ENCODE measurements at regions of chr1 and their contacts with region 1.

Region 1: DNA sequence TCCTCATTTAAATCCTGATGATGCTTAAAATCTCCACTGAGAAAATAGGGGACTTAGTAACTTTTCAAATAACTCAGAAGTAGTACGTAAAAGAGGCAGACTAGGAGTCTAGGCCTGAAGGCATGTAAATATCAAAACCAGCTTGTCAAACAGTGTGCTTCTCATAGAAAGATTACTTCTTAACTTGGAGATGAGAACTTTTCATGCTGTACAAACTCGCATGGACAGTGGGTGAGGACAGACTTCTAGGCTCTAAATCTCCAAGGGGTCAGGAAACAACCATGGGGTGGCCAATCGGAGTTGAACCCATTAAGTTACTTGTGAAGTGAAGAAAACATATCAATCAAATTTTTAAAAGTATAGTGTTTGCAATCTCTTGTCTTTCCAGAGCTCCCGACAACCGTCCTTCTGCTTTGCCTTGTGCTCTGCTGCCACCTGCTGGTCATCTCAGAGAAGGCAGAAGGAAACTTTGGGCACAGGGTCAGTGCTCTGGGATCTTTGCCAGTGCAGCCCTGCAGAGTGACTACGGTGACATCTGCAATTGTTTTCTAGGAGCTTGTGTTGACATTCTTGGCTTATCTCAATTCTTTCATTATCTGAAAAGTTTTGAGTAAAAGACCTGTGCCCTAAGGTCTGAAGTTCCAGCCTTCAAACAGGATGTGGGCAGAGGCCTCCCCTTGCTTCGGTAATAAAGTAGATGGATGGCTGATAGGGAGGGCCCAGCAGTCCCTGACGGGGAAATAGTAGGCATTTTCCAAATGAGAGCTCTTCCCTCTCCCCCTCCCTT is 105.1 kb upstream of the PDE4B start:
- DNase-seq: peak; percentile 88
- ATAC-seq: peak; percentile 88
- H3K4me3 Mint-ChIP-seq: no peak overlapping the region
- H3K27ac Mint-ChIP-seq: no peak overlapping the region
- H3K4me1 Mint-ChIP-seq: peaks cover 2% of the 10 kb centered on the region
- H3K27me3 Mint-ChIP-seq: peaks cover 10% of the 10 kb centered on the region

Region 2: DNA sequence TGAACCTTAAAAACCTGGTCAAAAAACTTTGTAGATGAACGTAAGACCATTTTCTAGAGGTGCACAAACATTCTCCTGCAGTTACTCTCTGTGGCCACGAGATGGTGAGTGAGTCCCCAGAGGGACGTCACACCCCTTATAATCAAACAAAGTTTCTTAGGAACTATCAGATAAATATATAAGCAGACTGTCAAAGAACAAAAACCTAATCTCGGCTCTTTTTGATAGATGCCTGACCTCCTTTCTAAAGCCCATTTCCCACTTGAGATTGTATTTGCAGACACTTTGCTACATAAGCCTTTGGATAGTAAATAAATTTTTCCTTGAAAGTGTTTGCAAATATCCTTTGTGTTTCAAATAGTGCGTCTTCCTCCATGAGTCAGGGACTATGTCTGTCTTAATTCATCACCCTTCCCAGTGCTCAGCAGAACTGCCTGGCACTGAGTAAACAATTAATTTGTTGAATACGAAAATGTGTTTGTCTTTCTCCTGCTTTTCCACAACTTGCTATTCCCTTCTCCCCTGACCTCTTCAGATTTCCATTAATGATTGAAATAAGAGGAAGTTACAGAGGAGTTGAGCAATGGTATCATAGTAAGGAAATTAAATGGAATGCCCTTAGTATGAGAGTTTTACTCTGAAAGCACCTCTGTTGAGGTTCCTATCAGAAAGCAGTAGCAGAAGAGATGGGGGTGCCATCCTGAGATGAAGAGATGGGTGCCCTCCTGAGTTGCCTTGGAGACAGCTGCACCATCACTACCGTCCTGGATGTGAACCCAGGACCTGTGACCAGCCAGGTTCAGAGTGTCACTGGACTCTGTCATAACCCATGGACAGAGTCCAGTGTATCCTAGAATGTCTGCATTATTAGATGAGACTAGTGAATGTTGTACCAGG is 1000.5 kb before region 1 on chr1:
- CTCF ChIA-PET with region 1: no interaction called
- POLR2A ChIA-PET with region 1: no interaction called
- intact Hi-C with region 1: loop called (anchors 5 kb)
- DNase-seq: peak; percentile 51
- ATAC-seq: peak; percentile 76
- H3K4me3 Mint-ChIP-seq: no peak overlapping the region
- H3K27ac Mint-ChIP-seq: no peak overlapping the region
- H3K4me1 Mint-ChIP-seq: peaks cover 5% of the 10 kb centered on the region
- H3K27me3 Mint-ChIP-seq: no peaks in the 10 kb centered on the region

Region 3: DNA sequence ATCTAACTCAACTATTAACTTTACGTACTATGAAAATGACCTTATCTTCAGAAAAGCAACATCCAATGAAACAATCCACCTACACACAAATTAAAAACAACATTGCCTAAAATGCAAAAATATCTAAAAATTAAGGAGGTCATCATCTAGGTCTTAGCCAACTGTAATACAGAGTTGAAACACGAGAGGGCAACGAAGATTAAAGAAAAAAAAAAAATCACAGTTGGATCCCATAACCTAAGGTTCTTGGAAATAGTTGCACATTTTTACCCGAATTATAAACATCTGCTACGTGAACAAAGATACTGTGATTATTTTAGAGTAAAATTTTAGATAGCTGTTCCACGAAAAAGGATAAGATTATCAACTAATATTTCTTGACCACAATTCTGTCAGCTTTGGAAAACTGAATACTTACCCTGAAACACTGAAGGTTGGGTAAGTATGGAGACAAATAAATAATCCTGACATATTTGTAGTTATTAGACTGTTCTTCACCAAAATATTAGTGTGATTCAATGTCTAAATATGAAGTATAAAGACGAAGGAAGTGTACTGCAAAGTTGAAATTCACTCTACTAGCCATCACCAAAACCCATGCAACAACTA is 627.6 kb before region 1 on chr1:
- CTCF ChIA-PET with region 1: interaction called, 12 read pairs
- POLR2A ChIA-PET with region 1: no interaction called
- intact Hi-C with region 1: loop called (anchors 2 to 5 kb)
- DNase-seq: no peak
- ATAC-seq: no peak
- H3K4me3 Mint-ChIP-seq: no peak overlapping the region
- H3K27ac Mint-ChIP-seq: no peak overlapping the region
- H3K4me1 Mint-ChIP-seq: peaks cover 51% of the 10 kb centered on the region
- H3K27me3 Mint-ChIP-seq: no peaks in the 10 kb centered on the region

Region 4: DNA sequence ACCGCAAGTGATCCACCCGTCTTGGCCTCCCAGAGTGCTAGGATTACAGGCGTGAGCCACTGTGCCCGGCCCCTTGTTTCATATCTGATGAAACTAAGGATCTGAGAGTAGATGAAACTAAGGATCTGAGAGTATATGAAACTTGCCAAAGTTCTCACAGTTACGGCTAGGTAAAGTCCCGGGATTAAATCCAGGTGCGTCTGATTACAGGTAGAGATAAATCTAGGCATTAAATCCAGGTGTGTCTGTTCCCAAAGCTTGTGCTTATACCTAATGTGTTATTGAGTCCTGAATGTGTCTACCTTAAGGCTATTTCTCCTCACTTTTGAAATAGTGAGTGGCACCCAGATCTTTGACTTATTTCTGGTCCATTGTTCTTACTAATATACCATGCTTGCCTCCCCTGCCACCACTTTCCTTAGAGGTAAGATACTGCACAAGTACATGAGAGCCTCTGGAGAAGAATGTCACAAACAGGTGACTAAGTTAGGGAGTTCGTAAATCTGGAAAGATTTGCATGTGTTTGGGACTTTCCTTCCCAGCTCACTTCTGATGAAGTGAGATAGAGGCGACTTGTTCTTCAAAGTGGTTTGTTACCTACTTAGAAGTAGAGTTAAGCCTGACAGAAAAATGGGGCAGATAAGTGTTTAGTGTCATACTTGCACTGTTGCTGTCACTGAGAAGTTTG is 473.1 kb before region 1 on chr1:
- CTCF ChIA-PET with region 1: interaction called, 6 read pairs
- POLR2A ChIA-PET with region 1: no interaction called
- intact Hi-C with region 1: loop called in 1 of 2 experiments (anchors 5 kb)
- DNase-seq: peak; percentile 13
- ATAC-seq: peak; percentile 45
- H3K4me3 Mint-ChIP-seq: no peak overlapping the region
- H3K27ac Mint-ChIP-seq: peak overlapping the region; percentile 40
- H3K4me1 Mint-ChIP-seq: peaks cover 44% of the 10 kb centered on the region
- H3K27me3 Mint-ChIP-seq: no peaks in the 10 kb centered on the region

Region 5: GRCh38 chr1:65235867-65236805 is 451.5 kb before region 1 on chr1:
- CTCF ChIA-PET with region 1: interaction called, 41 read pairs
- POLR2A ChIA-PET with region 1: no interaction called
- intact Hi-C with region 1: loop called (anchors 1 kb)
- DNase-seq: no peak
- ATAC-seq: no peak
- H3K4me3 Mint-ChIP-seq: no peak overlapping the region
- H3K27ac Mint-ChIP-seq: no peak overlapping the region
- H3K4me1 Mint-ChIP-seq: peaks cover 10% of the 10 kb centered on the region
- H3K27me3 Mint-ChIP-seq: peaks cover 12% of the 10 kb centered on the region

Region 6: GRCh38 chr1:65703853-65704252 is 16.2 kb after region 1 on chr1:
- CTCF ChIA-PET with region 1: interaction called, 10 read pairs
- POLR2A ChIA-PET with region 1: no interaction called
- intact Hi-C with region 1: no loop called
- DNase-seq: no peak
- ATAC-seq: no peak
- H3K4me3 Mint-ChIP-seq: no peak overlapping the region
- H3K27ac Mint-ChIP-seq: no peak overlapping the region
- H3K4me1 Mint-ChIP-seq: no peaks in the 10 kb centered on the region
- H3K27me3 Mint-ChIP-seq: peaks cover 8% of the 10 kb centered on the region

Measured in activated CD4-positive, alpha-beta T cell treated with anti-CD3 and anti-CD28 coated beads for 36 hours (primary cell).